B cell (primary cell): ENCODE measurements at regions of chr7 and their contacts with region 1.

Region 1: DNA sequence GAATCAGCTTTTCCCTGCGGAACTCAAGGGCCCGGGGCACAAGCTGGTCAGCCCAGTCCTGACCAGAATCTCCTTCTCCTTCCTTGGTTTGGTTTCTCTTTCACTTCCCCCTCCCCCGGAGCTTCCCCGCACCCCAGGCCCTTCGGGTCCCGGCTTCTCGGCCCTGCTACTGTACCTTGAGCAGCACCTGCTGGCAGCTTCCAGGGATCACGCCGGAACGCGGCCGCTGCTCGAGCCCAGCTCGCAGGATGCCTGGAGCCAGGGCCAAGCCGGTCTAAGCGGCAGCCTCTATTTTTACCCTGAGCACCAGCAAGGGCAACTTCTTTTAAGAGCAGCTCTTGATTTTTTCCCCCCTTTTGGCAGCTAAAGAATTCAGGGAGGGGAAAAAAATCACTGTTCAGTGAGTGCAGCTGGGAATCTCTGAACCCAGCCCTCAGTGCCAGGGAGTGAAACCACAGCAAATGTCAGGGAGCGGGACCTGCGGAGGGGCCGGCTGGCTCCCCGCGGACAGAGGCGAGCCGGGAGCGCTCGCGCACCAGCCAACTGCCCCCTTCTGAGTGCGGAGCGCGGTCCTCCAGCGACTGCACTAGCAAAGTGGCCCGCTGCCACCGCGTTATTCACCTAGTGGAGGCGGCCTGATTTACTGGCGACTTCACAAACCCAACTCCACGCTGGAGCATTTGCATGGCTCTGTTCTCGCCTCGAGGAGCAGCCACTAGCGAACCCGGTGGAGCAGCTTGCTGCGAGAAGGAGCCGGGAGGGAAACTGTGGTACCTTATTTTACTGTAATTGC is 2.4 kb upstream of the INHBA start:
- DNase-seq: peak; percentile 87
- ATAC-seq: peak; percentile 94
- H3K4me3 ChIP-seq: peak overlapping the region; percentile 42 to 77 (median 65)
- H3K4me3 Mint-ChIP-seq: peak overlapping the region; percentile 89
- H3K27ac ChIP-seq: no peak overlapping the region
- H3K27ac Mint-ChIP-seq: peak overlapping the region; percentile 61
- H3K4me1 ChIP-seq: peaks cover 15% of the 10 kb centered on the region in 2 donors
- H3K4me1 Mint-ChIP-seq: peaks cover 23% of the 10 kb centered on the region
- H3K27me3 ChIP-seq: peaks cover 0 to 8% (median 0%) of the 10 kb centered on the region in 4 experiments
- H3K27me3 Mint-ChIP-seq: peaks cover 27% of the 10 kb centered on the region
- CTCF ChIP-seq: peak; percentile 79

Region 2: DNA sequence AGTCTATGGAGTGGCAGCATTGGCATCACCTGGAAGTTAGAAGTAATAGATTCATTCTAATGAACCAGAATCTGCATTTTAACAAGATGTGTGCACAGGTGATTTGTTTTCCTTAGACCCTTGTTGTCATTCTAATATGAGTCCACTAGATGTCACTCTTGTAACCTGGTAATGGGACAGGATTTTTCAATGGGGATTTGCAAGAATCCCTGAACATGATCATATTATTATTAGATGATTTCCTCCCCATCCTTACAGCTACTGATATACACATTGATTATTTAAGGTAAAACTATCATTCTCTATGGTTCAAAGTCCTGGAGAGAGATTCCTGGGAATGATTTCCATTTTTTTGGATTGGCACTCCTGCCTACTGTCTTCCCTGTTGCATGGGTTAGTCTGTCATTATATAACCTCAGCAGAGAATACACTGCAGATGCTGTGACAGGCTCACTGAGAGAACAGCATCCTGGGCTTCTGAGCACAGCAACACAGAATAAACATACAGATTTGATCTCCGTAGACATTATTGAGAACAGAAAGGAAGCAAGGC is 1375.6 kb before region 1 on chr7:
- CTCF ChIA-PET with region 1: interaction called, 24 read pairs
- POLR2A ChIA-PET with region 1: no interaction called
- intact Hi-C with region 1: loop called (anchors 2 kb)
- DNase-seq: peak; percentile 45
- ATAC-seq: no peak
- H3K4me3 ChIP-seq: no peak overlapping the region
- H3K4me3 Mint-ChIP-seq: no peak overlapping the region
- H3K27ac ChIP-seq: no peak overlapping the region
- H3K27ac Mint-ChIP-seq: no peak overlapping the region
- H3K4me1 ChIP-seq: no peaks in the 10 kb centered on the region
- H3K4me1 Mint-ChIP-seq: no peaks in the 10 kb centered on the region
- H3K27me3 ChIP-seq: no peaks in the 10 kb centered on the region
- H3K27me3 Mint-ChIP-seq: no peaks in the 10 kb centered on the region
- CTCF ChIP-seq: peak; percentile 88

Region 3: DNA sequence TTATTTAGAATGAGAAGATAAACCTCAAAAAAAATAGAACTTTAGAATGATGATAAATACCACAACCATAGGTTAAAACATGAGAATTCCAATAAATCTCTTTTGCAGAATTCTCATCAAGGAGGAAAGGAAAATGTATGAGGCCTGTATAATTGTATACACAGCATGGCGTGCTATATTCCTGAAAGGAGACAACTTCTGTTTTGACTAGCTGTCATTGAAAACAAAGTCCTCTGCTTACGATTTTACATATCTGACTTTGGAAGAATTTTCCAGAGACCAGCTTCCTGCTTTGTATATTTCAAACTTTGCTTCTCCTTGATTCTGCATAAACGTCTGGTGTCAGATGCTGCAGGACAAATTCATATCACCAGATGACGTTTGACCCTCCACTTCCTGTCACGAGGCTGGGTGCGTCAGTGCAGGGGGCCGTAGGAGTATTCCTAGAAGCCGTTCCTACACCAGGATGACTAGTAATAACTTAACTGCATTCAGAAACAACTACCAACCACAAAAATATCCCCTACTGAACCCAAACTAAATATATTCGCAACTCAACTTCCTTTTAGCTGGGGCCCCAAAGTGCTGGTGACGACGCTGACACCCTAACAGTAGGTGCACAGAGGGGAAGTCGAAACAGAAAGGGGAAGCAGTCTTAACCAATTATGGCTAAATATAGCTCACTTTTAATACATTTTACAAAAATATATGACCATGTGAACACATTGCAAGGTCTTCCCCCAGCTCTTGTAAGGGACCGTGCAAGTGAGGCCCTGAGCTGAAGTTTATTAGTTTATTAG is 176.2 kb after region 1 on chr7:
- CTCF ChIA-PET with region 1: interaction called, 4 read pairs
- POLR2A ChIA-PET with region 1: no interaction called
- intact Hi-C with region 1: loop called (anchors 1 kb)
- DNase-seq: peak; percentile 96
- ATAC-seq: peak; percentile 89
- H3K4me3 ChIP-seq: peak overlapping the region in 1 of 5 experiments; percentile 41
- H3K4me3 Mint-ChIP-seq: peak overlapping the region; percentile 84
- H3K27ac ChIP-seq: peak overlapping the region; percentile 87 to 91
- H3K27ac Mint-ChIP-seq: peak overlapping the region; percentile 93
- H3K4me1 ChIP-seq: peaks cover 57 to 63% of the 10 kb centered on the region in 2 donors
- H3K4me1 Mint-ChIP-seq: peaks cover 71% of the 10 kb centered on the region
- H3K27me3 ChIP-seq: no peaks in the 10 kb centered on the region
- H3K27me3 Mint-ChIP-seq: no peaks in the 10 kb centered on the region
- CTCF ChIP-seq: no peak